ENCODE measurements at regions of chr4 and their contacts with region 1.

Region 1: GRCh38 chr4:153705743-153706468 is 21.8 kb downstream of the TLR2 start:
- DNase-seq: no peak
- H3K4me3 Mint-ChIP-seq: no peak overlapping the region
- H3K27ac Mint-ChIP-seq: peak overlapping the region; percentile 29
- H3K4me1 Mint-ChIP-seq: peaks cover 20% of the 10 kb centered on the region
- H3K27me3 Mint-ChIP-seq: peaks cover 4% of the 10 kb centered on the region

Region 2: GRCh38 chr4:153733751-153734448 is 28.0 kb after region 1 on chr4:
- intact Hi-C with region 1: loop called (anchors 2 kb)
- DNase-seq: no peak
- H3K4me3 Mint-ChIP-seq: no peak overlapping the region
- H3K27ac Mint-ChIP-seq: no peak overlapping the region
- H3K4me1 Mint-ChIP-seq: peaks cover 23% of the 10 kb centered on the region
- H3K27me3 Mint-ChIP-seq: peaks cover 59% of the 10 kb centered on the region

Region 3: GRCh38 chr4:153781717-153782416 is 76.0 kb after region 1 on chr4:
- intact Hi-C with region 1: no loop called
- DNase-seq: no peak
- H3K4me3 Mint-ChIP-seq: no peak overlapping the region
- H3K27ac Mint-ChIP-seq: no peak overlapping the region
- H3K4me1 Mint-ChIP-seq: no peaks in the 10 kb centered on the region
- H3K27me3 Mint-ChIP-seq: peaks cover 63% of the 10 kb centered on the region